Lower leg skin (tissue), 4 donors: ENCODE measurements at regions of chr2 and their contacts with region 1.

Region 1: DNA sequence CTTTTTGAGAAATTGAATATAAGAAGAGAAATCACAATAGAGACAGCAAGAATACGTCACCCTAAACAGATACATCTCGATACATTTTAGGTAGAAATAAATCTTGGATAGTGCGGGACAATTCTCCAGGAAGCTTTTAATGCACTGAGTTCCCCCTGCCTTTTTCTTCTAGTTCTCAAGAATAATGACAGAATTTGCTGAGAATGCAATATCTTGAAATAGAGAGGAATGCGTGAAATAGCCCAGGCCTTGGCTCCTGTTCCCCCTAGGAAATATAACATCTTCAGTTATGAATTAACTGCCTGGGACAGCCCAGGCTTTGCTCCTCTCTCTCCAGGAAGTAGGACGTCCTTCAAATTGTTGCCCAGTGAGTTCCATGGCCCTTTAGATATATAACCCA is 7.6 kb upstream of the NRXN1 start:
- DNase-seq: no peak
- H3K4me3 ChIP-seq: no peak overlapping the region
- CTCF ChIP-seq: no peak
- POLR2A ChIP-seq: no peak

Region 2: GRCh38 chr2:50831676-50832075 is 207.9 kb before region 1 on chr2:
- intact Hi-C with region 1: no loop called
- DNase-seq: no peak
- H3K4me3 ChIP-seq: no peak overlapping the region
- CTCF ChIP-seq: no peak
- POLR2A ChIP-seq: no peak

Region 3: DNA sequence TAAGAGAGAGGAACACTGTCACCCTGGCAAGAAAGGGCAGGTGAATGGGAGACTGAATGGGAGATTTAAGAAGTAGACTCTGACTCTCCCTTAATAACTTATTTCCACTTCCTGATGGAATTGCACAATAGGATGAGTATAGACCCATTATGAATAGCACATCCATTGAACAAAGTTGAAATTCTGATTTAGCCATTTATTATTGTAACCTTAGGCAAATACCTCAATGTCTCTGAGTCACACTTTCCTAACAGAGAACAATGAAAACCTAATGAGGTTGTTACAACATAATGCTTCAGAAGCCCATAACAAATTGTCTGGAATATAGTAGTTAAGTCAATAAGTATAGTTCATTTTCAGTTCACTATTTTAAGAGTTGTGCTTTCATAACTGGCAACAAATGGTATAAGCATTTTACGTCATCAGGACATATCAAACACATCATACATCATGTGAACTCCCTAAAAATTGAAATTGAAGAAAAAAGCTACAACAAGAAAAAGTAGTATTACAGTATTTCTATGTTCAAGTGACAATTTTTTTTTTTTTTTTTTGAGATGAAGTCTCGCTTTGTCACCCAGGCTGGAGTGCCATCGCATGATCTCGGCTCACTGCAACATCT is 86.4 kb before region 1 on chr2:
- intact Hi-C with region 1: no loop called
- DNase-seq: no peak
- H3K4me3 ChIP-seq: no peak overlapping the region
- CTCF ChIP-seq: no peak
- POLR2A ChIP-seq: no peak

Region 4: DNA sequence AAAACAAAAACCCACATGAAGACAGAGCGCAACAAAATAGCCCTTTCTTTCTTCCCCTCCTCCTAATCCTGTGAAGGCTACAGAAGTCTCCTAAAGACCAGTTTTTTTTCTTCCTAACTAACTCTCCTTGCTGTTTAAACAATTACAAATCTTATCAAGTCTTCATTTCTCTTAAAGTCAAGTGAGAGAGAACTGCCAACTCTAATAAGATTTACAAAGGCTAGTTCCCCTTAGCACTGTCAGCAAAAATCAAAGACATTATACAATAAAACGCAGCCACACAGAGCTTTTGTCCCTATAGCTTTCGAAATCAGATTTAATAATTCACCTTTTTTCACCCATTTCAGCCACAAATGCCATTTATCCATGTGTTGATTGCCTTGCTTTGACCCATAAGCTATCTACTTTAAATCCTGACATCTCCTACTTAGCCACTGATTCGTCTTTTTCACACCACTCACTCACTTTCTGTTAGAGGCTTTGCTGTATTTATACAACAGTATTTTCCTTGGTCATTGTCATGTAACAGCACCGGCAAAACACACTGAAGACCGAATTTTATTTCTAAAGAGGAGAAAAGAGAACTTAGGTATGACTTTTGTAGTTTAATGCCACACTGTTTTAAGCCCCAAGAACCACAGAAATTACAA is 13.6 kb before region 1 on chr2:
- intact Hi-C with region 1: loop called (anchors 2 kb)
- DNase-seq: no peak
- H3K4me3 ChIP-seq: no peak overlapping the region
- CTCF ChIP-seq: no peak
- POLR2A ChIP-seq: no peak

Region 5: DNA sequence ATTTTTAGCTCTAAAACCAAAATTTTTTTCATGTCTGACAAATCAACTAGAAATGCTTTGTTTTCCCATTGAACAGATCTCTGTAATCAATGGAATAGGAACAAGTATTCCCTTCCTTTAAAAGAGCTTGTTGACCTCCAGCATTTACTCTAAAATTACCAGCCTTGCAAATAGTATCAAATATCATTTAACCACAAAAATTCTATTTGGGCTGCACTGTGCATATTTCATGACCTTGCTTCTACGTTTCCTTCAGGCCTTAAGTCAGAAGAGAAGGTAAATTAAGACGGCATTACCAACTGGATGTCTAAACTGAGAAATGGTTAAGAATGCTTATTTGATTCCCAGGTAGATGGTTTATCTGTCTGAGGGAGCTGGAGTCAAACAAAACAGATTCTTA is 25.7 kb after region 1 on chr2:
- intact Hi-C with region 1: no loop called
- DNase-seq: no peak
- H3K4me3 ChIP-seq: no peak overlapping the region
- CTCF ChIP-seq: no peak
- POLR2A ChIP-seq: no peak